GM18951 (cell line): ENCODE measurements at regions of chr5 and their contacts with region 1.

Region 1: DNA sequence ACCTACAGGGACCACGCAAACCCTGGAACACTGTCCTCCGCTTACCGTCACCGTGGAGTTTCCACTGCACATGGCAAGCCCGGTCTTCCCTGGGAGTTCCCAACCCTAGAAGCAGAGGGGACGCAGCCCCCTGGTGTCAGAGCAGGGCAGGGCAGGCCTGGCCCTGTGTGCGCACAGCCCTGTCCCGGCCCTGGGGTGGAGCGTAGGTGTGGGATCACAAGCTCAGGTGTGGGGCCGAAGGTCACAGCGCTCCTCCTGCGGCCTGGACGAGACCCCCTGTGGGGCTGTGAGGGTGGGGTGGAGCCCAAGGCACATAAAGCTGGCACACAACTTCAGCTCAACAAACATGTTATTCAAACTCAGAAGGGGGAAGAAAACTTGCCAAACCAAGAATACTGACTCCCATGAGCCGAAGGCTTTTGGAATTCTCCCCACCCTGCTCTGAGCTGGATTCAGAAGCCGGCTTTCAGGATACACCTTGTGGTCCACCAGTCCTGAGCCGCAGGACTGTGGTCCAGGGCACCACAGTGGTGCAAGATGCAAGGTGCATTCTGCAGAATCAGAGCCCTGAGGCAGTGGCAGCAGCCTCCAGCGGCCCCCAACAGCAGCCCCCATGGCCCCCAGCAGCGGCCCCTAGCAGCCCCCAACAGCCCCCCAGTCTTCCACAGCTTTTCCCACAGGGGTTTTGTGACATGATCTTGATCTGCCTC is 11.8 kb upstream of the EXOC3 start:
- POLR2A ChIP-seq: no peak

Region 2: GRCh38 chr5:317086-317811 is 113.9 kb before region 1 on chr5:
- in situ Hi-C with region 1: loop called (anchors 10 kb)
- POLR2A ChIP-seq: no peak

Region 3: DNA sequence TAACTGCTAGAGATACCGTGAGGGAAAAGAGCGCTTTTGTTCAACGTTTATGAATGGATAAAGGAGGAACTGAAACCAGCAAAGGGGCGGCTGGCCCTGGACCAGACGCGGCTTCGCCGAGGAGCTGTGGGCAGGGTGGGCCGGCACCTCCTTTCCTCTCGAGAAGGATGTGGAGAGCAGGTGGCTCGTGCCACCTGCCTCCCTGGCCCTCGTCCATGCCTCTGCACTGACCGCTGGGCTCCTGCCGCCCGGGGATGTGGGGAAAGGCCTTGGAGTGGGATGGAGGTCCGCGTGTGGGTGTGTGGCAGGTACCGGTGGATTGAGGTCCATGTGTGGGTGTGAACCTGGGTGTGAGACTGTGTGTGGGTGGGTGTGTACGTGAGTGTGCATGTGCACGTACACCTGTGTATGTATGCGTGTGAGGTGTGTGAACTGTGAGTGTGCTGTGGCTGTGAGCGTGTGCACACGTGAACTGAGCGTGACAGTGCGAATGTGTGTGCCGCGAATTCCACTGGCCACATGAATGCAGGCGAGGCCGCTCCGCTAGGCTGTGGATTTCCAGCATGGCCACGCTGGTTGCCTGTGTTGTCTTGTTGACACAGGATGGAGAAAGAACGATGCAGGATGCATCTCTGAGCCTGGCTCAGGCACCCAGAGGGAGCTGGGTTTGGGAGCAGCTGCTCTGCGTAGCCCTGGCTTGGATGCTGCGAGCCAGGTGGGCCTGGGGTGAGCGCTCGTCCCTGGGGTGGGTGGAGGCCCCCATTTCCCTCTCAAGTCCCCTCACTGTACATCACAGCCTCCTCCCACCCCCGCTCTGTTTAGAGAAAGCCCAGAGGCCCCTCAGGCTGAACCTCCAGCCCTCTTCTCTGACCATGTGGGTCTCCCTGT is 176.6 kb after region 1 on chr5:
- in situ Hi-C with region 1: no loop called
- POLR2A ChIP-seq: no peak